Right cardiac atrium (tissue), 5 donors: ENCODE measurements at regions of chrX and their contacts with region 1.

Region 1: DNA sequence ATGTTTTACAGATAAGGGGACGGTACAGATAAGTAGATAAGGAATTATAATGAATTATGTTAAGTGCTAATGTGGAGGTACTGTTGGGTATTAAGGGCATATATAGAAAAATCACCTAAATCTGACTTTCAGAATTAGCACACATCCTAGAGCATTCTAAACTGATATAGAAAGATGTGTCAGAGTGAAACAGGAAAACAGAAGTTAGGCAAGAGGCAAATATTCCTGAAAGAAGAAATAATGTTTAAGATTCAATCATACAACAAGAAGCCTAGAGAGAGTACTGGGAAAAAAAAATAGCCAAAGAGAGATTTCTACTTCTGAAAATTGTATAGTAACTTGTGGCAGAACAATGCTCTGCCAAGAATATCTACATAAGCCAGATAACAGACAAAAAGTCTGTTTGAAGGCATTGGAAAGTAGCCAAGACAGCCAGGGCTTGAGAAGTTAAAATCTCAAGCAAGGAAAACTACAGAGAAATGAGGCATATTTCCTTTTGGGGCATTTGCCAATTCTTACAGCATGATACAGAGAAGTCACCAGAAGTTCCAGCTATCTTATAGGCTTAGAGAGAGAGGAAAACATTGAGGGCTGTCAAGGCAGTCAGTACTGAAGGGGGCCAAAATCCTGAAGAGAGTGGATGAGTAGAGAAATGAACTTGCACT is 646.0 kb downstream of the RPA4 start:
- DNase-seq: no peak
- ATAC-seq: no peak
- H3K4me3 ChIP-seq: no peak overlapping the region
- H3K27ac ChIP-seq: no peak overlapping the region
- H3K4me1 ChIP-seq: no peaks in the 10 kb centered on the region
- H3K27me3 ChIP-seq: no peaks in the 10 kb centered on the region

Region 2: GRCh38 chrX:97547877-97548578 is 18.4 kb after region 1 on chrX:
- intact Hi-C with region 1: loop called in 1 of 4 experiments (anchors 2 kb)
- DNase-seq: no peak
- ATAC-seq: no peak
- H3K4me3 ChIP-seq: no peak overlapping the region
- H3K27ac ChIP-seq: no peak overlapping the region
- H3K4me1 ChIP-seq: no peaks in the 10 kb centered on the region
- H3K27me3 ChIP-seq: no peaks in the 10 kb centered on the region